Heart left ventricle (tissue), 16 donors: ENCODE measurements at regions of chr4 and their contacts with region 1.

Region 1: DNA sequence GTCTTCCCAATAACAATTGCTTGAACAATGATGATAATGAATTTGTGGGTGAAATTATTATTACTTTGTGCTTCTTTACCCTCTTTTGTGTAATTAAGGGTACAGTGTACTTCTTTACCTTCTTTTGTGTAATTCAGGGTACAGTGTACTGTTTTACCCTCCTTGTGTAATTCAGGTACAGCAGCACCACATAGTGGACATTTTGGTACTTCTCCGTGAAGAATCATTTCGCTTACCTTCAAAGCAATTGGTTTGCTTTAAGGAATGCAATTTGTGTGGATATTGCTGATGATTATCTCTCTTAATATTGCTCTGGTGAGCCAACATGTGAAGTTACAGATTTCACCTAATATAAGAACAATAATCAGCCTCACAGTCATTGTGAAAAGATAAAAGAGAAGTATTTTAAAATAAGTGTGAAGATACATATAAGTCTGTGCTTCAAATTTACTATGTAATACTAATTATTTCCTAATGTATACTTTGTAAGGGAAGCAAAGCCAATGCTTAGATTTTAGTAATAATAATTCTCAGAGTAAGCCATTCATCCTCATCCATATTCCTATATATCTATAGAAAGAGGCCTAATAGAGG is 27.2 kb upstream of the SEC24B start:
- DNase-seq: no peak
- ATAC-seq: peak in 3 of 4 donors; percentile 64 to 77 (median 66)
- H3K4me3 ChIP-seq: no peak overlapping the region
- H3K27ac ChIP-seq: no peak overlapping the region
- H3K4me1 ChIP-seq: peaks cover 0 to 3% (median 0%) of the 10 kb centered on the region in 12 donors
- H3K27me3 ChIP-seq: no peaks in the 10 kb centered on the region
- CTCF ChIP-seq: peak; percentile 58 to 78 (median 66)
- POLR2A ChIP-seq: no peak

Region 2: GRCh38 chr4:108683479-108683878 is 723.0 kb before region 1 on chr4:
- intact Hi-C with region 1: loop called in 3 of 10 experiments (anchors 5 to 10 kb)
- DNase-seq: no peak
- ATAC-seq: no peak
- H3K4me3 ChIP-seq: no peak overlapping the region
- H3K27ac ChIP-seq: no peak overlapping the region
- H3K4me1 ChIP-seq: peaks cover 0 to 5% (median 0%) of the 10 kb centered on the region in 12 donors
- H3K27me3 ChIP-seq: no peaks in the 10 kb centered on the region
- CTCF ChIP-seq: peak in 7 of 12 donors; percentile 7 to 42 (median 19)
- POLR2A ChIP-seq: no peak

Region 3: GRCh38 chr4:108834835-108835384 is 571.5 kb before region 1 on chr4:
- intact Hi-C with region 1: loop called (anchors 1 to 5 kb)
- DNase-seq: no peak
- ATAC-seq: no peak
- H3K4me3 ChIP-seq: no peak overlapping the region
- H3K27ac ChIP-seq: no peak overlapping the region
- H3K4me1 ChIP-seq: peaks cover 0 to 19% (median 0%) of the 10 kb centered on the region in 12 donors
- H3K27me3 ChIP-seq: no peaks in the 10 kb centered on the region
- CTCF ChIP-seq: peak; percentile 45 to 78 (median 70)
- POLR2A ChIP-seq: no peak

Region 4: GRCh38 chr4:108972613-108973283 is 433.7 kb before region 1 on chr4:
- intact Hi-C with region 1: loop called in 1 of 10 experiments (anchors 5 kb)
- DNase-seq: no peak
- ATAC-seq: no peak
- H3K4me3 ChIP-seq: no peak overlapping the region
- H3K27ac ChIP-seq: no peak overlapping the region
- H3K4me1 ChIP-seq: no peaks in the 10 kb centered on the region
- H3K27me3 ChIP-seq: no peaks in the 10 kb centered on the region
- CTCF ChIP-seq: no peak
- POLR2A ChIP-seq: no peak